A549 (cell line): ENCODE measurements at regions of chr7 and their contacts with region 1.

Region 1: DNA sequence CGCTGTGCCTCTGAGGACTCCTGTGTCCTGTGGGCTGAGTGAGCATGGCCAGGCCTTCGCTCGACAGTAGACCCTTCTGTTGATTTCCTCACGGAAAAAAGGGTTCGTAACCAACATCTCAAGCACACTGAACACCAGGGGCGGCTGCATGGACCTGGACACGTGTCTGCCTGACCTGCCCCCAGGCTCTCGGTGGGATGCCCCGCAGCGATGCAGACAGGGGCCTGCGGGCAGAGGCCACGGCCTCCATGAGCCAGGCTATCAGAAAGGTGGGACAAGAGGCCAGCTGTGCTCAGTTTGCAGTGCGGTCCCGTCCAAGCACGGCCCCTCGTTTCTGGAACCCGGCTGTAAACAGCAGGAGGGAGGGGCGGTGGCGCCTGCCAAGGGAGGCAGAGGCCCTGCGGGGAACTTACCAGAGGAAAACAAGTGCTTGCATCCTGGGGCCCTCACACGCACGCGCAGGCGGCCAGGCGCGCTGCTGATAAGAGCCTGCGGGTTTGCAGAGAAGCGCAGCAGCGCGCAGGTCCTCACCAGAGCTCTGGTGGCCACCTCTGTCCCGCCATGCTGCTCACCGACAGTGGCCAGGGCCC is 10.6 kb downstream of the GPR146 start:
- DNase-seq: no peak
- ATAC-seq: no peak
- H3K4me3 ChIP-seq: no peak overlapping the region
- H3K27ac ChIP-seq: no peak overlapping the region
- H3K4me1 ChIP-seq: no peaks in the 10 kb centered on the region
- CTCF ChIP-seq: no peak
- EP300 ChIP-seq: no peak
- POLR2A ChIP-seq: no peak
- RAD21 ChIP-seq: no peak

Region 2: DNA sequence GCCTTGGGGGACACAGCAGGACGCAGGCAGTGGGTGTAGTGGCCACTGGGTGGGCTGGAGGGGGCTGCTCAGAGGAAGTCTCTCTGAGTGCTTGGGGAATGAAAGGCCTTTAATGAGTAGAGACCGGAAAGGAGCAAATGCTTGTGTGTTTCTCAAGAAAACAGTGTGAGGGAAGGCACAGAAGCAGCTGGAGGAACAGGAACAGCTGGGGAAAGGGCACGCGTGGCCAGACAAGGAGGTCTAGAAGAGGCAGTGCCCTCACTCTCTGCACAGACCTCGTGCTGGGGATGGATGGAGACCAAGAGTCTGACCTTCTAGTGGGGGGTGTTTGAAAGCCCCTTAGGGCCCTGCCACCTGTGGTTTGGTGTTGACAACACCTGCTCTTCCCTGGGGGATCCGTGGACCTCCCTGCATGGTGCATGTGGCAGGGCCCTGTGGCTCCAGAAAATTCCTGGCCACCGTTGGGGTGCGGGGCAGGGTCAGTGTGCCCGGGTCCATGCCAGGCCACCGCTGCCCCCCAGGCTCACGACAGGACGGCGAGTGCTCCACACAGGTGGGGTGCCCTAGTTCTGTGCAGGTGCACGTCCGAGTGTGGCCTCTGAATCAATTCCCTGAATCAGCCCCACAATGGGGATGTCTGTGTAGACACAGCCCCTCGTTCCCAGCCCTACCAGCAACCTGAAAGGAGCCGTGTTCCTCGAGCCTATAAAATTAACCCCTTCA is 888.5 kb before region 1 on chr7:
- CTCF ChIA-PET with region 1: no interaction called
- POLR2A ChIA-PET with region 1: no interaction called
- DNase-seq: no peak
- ATAC-seq: no peak
- H3K4me3 ChIP-seq: no peak overlapping the region
- H3K27ac ChIP-seq: no peak overlapping the region
- H3K4me1 ChIP-seq: no peaks in the 10 kb centered on the region
- CTCF ChIP-seq: no peak
- EP300 ChIP-seq: no peak
- POLR2A ChIP-seq: no peak
- RAD21 ChIP-seq: no peak

Region 3: GRCh38 chr7:1044191-1045068 is 10.5 kb before region 1 on chr7 and contains the start of gene GPR146:
- CTCF ChIA-PET with region 1: interaction called, 16 read pairs
- POLR2A ChIA-PET with region 1: no interaction called
- DNase-seq: peak; percentile 91 to 99
- ATAC-seq: peak; percentile 89 to 92
- H3K4me3 ChIP-seq: peak within 1 kb of the TSS; percentile 60
- H3K27ac ChIP-seq: peak within 1 kb of the TSS; percentile 75 to 85
- H3K4me1 ChIP-seq: peaks cover 18% of the 10 kb centered on the region
- CTCF ChIP-seq: peak; percentile 65
- EP300 ChIP-seq: no peak
- POLR2A ChIP-seq: no peak
- RAD21 ChIP-seq: 0 out of 5 replicates have a peak, but pooled peaks of 1 of the 2 experiments have one; percentile 19
- polyA plus RNA-seq, gene GPR146: 0.50 and 0.87 TPM in 2 replicates